Colonic mucosa (tissue), 4 donors: ENCODE measurements at regions of chr19 and their contacts with region 1.

Region 1: DNA sequence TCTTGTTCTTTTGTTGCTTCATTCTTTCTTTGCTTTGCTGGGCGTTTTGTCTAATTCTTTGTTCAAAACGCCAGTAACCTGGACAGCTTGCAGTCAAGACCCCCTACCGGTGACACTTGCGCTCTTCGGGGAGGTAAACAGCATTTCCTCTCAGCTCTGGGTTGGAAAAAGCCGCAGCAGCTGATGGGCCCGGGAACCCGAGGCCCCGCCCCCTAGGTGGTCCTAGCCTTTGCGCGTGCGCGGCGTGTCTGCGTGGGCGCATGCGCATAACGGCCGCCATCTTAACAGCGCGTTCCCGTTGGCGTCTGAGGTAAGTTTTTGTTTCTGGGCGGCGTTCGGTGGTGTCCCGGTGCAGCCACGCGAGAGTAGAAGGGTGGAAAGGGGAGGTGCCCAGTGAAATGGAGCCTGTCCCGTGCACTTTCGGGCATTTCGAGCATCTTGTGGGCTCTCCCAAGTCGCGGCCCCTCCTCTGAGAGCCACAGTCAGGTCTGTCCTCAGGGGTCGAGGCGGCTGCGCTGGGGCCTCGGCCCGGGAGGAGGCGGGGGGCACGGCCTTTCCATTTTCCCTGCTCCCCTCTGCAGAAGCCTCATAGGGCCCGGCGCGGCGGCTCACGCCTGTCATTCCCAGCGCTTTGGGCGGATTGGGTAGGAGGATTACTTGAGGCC is at the start of gene ZNF559:
- DNase-seq: peak; percentile 94
- H3K4me3 ChIP-seq: peak within 1 kb of the TSS; percentile 82
- H3K27ac ChIP-seq: peak within 1 kb of the TSS; percentile 84
- H3K4me1 ChIP-seq: no peaks in the 10 kb centered on the region
- H3K27me3 ChIP-seq: no peaks in the 10 kb centered on the region
- CTCF ChIP-seq: no peak
- total RNA-seq, gene ZNF559: 7.7 to 7.8 TPM

Region 2: GRCh38 chr19:9435279-9436268 is 111.5 kb after region 1 on chr19 and contains the start of gene ZNF266:
- intact Hi-C with region 1: loop called (anchors 10 kb)
- DNase-seq: peak; percentile 91
- H3K4me3 ChIP-seq: peak within 1 kb of the TSS; percentile 67
- H3K27ac ChIP-seq: peak within 1 kb of the TSS; percentile 65
- H3K4me1 ChIP-seq: no peaks in the 10 kb centered on the region
- H3K27me3 ChIP-seq: no peaks in the 10 kb centered on the region
- CTCF ChIP-seq: peak; percentile 70
- total RNA-seq, gene ZNF266: 12.5 to 17.1 TPM